Activated CD4-positive, alpha-beta T cell treated with anti-CD3 and anti-CD28 coated beads for 36 hours (primary cell): ENCODE measurements at regions of chr13 and their contacts with region 1.

Region 1: DNA sequence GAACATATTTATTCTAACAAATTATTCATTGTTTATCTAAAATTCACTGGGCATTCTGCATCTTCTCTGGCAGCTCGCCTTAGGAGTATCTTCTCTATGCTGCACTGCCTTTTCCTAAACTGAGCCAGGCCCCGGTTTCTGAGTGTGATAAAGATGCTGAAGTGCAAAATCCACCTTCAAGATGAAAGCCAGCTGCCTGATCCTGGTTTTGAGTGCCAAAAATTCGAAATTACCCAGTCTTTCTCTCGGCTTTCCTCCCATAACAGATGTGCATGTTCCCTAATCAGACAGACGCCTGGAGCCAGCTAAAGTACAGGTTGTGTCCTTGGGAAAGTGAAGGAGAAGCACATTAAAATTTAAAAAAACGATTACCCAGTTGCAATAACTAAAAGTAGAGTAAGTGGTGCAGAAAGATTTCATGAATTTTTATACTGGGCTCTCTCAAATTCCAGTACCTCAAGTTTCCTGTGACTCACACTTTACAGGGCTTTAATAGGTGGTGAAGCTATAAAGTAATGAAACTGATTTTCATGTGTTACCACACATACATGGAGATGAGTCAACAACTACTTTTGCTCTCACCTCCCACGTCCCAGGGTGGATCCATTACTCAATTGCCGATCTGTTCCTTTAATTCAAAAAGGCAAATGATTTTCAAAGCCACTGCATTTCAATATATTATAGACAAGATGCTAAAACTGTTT is 65.0 kb upstream of the GTF2F2 start:
- DNase-seq: peak; percentile 83
- ATAC-seq: peak; percentile 99
- H3K4me3 Mint-ChIP-seq: no peak overlapping the region
- H3K27ac Mint-ChIP-seq: no peak overlapping the region
- H3K4me1 Mint-ChIP-seq: peaks cover 28% of the 10 kb centered on the region
- H3K27me3 Mint-ChIP-seq: peaks cover 38% of the 10 kb centered on the region

Region 2: DNA sequence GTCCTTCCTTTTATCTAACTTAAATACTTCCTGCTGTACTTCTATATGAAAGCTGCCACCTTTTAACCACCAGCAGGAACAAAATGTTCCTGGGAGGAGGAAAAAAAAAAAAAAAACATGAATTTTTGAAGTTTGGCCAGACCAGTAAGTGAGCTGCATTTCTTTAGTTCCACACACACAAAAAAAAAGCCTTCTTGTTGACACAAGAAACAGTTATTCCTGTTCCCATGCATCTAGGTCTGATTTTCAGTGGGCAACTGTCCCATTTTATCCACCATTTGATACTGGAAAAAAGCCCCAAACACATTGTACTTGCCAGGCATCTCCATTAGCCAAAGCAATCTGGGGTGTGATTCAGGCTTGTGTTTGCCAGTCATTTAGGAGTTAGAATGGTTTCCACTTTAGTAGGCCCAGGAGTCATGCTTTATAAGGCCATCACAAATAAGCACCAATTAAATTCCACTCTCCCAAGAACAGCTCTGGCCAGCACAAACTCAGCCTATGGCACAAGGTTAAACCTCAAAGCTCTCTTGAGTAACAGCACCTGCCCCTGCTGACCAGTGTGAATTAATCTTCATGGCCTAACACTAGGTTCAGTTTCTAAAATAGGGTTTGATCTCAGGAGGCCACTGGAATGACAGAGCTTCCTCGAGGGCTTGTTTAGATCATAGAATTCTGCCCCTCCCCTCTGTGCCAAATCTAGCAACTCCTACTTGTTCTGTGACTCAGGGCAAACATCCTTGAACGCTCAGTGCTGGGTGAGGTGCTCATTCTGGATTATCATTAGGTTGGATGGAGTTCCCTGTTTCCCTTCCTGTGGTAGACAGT is 133.2 kb before region 1 on chr13:
- CTCF ChIA-PET with region 1: no interaction called
- POLR2A ChIA-PET with region 1: no interaction called
- intact Hi-C with region 1: no loop called
- DNase-seq: no peak
- ATAC-seq: no peak
- H3K4me3 Mint-ChIP-seq: no peak overlapping the region
- H3K27ac Mint-ChIP-seq: no peak overlapping the region
- H3K4me1 Mint-ChIP-seq: no peaks in the 10 kb centered on the region
- H3K27me3 Mint-ChIP-seq: peaks cover 6% of the 10 kb centered on the region

Region 3: DNA sequence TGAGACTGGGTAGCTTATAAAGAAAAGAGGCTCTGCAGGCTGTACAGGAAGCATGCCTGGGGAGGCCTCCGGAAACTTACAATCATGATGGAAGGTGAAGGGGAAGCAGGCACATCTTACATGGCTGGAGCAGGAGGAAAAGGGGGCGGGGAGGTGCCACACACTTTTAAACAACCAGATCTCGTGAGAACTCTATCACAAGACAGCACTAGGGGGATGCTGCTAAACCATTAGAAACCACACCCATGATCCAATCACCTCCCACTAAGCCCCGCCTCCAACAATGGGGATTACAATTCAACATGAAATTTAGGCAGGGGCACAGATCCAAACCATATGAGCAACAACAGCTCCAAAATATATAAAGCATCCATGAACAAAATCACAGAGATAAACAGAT is 18.5 kb after region 1 on chr13:
- CTCF ChIA-PET with region 1: no interaction called
- POLR2A ChIA-PET with region 1: no interaction called
- intact Hi-C with region 1: no loop called
- DNase-seq: no peak
- ATAC-seq: no peak
- H3K4me3 Mint-ChIP-seq: no peak overlapping the region
- H3K27ac Mint-ChIP-seq: no peak overlapping the region
- H3K4me1 Mint-ChIP-seq: no peaks in the 10 kb centered on the region
- H3K27me3 Mint-ChIP-seq: peaks cover 9% of the 10 kb centered on the region

Region 4: GRCh38 chr13:45109102-45109720 is 53.9 kb after region 1 on chr13:
- CTCF ChIA-PET with region 1: no interaction called
- POLR2A ChIA-PET with region 1: no interaction called
- intact Hi-C with region 1: no loop called
- DNase-seq: peak; percentile 20
- ATAC-seq: peak; percentile 90
- H3K4me3 Mint-ChIP-seq: no peak overlapping the region
- H3K27ac Mint-ChIP-seq: no peak overlapping the region
- H3K4me1 Mint-ChIP-seq: peaks cover 6% of the 10 kb centered on the region
- H3K27me3 Mint-ChIP-seq: peaks cover 10% of the 10 kb centered on the region

Region 5: GRCh38 chr13:45119991-45120864 is 64.9 kb after region 1 on chr13 and contains the start of gene GTF2F2:
- CTCF ChIA-PET with region 1: no interaction called
- POLR2A ChIA-PET with region 1: no interaction called
- intact Hi-C with region 1: loop called (anchors 1 kb)
- DNase-seq: peak; percentile 90
- ATAC-seq: peak; percentile 68
- H3K4me3 Mint-ChIP-seq: no peak within 1 kb of the TSS
- H3K27ac Mint-ChIP-seq: no peak within 1 kb of the TSS
- H3K4me1 Mint-ChIP-seq: peaks cover 5% of the 10 kb centered on the region
- H3K27me3 Mint-ChIP-seq: no peaks in the 10 kb centered on the region
- total RNA-seq, gene GTF2F2: 19.9 to 25.6 TPM

Region 6: GRCh38 chr13:45773236-45773635 is 717.9 kb after region 1 on chr13:
- CTCF ChIA-PET with region 1: no interaction called
- POLR2A ChIA-PET with region 1: no interaction called
- intact Hi-C with region 1: no loop called
- DNase-seq: no peak
- ATAC-seq: no peak
- H3K4me3 Mint-ChIP-seq: no peak overlapping the region
- H3K27ac Mint-ChIP-seq: no peak overlapping the region
- H3K4me1 Mint-ChIP-seq: peaks cover 5% of the 10 kb centered on the region
- H3K27me3 Mint-ChIP-seq: no peaks in the 10 kb centered on the region